GM10248 (cell line): ENCODE measurements at regions of chr19 and their contacts with region 1.

Region 1: GRCh38 chr19:12757544-12758274 is 6.1 kb downstream of the BEST2 start:
- DNase-seq: peak; percentile 85
- CTCF ChIP-seq: peak; percentile 82

Region 2: GRCh38 chr19:12610540-12611360 is 147.0 kb before region 1 on chr19 and contains the starts of genes ZNF490 and ZNF791:
- CTCF ChIA-PET with region 1: no interaction called
- POLR2A ChIA-PET with region 1: no interaction called
- DNase-seq: peak; percentile 96
- CTCF ChIP-seq: no peak

Region 3: DNA sequence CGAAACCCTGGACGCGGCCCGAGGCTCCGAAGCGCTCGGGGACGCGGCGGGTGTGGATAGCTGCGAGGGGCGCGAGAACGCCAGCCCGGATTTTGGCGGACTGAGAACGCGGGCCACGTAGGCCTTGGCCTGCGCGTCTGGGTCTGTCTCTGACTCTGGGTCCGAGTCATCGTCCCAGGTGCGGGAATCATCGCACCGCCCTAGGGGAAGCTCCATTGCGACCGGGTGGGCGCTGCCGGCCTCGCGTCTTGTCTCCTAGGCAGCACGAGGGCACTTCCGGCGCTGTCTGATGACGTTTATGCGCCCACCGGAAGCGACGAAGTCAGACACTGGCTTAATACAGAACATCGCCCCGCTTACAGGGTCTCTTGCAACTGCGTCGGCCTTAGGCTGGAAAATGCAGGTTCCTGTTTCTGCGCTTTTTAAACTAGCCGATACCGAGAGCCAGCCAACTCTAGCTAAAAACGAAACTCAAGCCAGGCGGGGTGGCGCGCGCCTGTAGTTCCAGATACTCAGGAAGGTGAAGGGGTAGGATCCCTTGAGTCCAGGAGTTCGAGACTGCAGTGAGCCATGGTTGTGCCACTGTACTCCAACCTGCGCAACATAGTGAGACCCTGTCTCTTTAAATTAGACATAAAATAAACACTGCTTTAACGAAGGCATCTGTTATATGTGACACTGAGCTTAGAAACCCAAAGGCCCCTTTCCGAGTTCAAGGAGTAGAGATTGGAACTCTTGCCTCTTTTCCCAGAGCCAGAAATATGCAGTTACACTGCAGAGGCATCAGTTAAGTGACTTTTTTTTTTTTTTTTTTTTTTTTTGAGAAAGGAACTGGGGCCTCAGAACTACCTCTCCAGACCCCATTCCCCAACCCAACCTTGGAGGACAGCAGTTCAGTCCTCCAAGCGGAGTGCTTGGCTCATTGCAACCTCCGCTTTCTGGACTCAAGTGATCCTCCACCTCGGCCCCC is 61.1 kb before region 1 on chr19 and contains the start of gene FBXW9:
- CTCF ChIA-PET with region 1: no interaction called
- POLR2A ChIA-PET with region 1: no interaction called
- DNase-seq: peak; percentile 98
- CTCF ChIP-seq: no peak

Region 4: GRCh38 chr19:12722566-12723380 is 34.9 kb before region 1 on chr19:
- CTCF ChIA-PET with region 1: interaction called, 19 read pairs
- POLR2A ChIA-PET with region 1: no interaction called
- DNase-seq: peak; percentile 97
- CTCF ChIP-seq: no peak

Region 5: GRCh38 chr19:12777217-12778016 is 19.7 kb after region 1 on chr19:
- CTCF ChIA-PET with region 1: interaction called, 91 read pairs
- POLR2A ChIA-PET with region 1: no interaction called
- DNase-seq: peak; percentile 75
- CTCF ChIP-seq: peak; percentile 94

Region 6: GRCh38 chr19:12806239-12807081 is 48.8 kb after region 1 on chr19 and contains the start of gene RNASEH2A:
- CTCF ChIA-PET with region 1: interaction called, 550 read pairs
- POLR2A ChIA-PET with region 1: no interaction called
- DNase-seq: peak; percentile 98
- CTCF ChIP-seq: no peak